T-cell (primary cell): ENCODE measurements at regions of chr5 and their contacts with region 1.

Region 1: GRCh38 chr5:158434749-158435148 is 575.8 kb upstream of the CLINT1 start:
- DNase-seq: no peak
- ATAC-seq: peak in 1 of 4 experiments; percentile 21
- H3K4me3 ChIP-seq: no peak overlapping the region
- H3K4me3 Mint-ChIP-seq: peak overlapping the region in 2 of 3 donors; percentile 49 to 76
- H3K27ac ChIP-seq: no peak overlapping the region
- H3K27ac Mint-ChIP-seq: peak overlapping the region in 1 of 2 donors; percentile 44
- H3K4me1 ChIP-seq: peaks cover 10 to 50% of the 10 kb centered on the region in 2 experiments
- H3K4me1 Mint-ChIP-seq: peaks cover 56 to 59% (median 58%) of the 10 kb centered on the region in 3 donors
- H3K27me3 ChIP-seq: no peaks in the 10 kb centered on the region
- H3K27me3 Mint-ChIP-seq: no peaks in the 10 kb centered on the region

Region 2: DNA sequence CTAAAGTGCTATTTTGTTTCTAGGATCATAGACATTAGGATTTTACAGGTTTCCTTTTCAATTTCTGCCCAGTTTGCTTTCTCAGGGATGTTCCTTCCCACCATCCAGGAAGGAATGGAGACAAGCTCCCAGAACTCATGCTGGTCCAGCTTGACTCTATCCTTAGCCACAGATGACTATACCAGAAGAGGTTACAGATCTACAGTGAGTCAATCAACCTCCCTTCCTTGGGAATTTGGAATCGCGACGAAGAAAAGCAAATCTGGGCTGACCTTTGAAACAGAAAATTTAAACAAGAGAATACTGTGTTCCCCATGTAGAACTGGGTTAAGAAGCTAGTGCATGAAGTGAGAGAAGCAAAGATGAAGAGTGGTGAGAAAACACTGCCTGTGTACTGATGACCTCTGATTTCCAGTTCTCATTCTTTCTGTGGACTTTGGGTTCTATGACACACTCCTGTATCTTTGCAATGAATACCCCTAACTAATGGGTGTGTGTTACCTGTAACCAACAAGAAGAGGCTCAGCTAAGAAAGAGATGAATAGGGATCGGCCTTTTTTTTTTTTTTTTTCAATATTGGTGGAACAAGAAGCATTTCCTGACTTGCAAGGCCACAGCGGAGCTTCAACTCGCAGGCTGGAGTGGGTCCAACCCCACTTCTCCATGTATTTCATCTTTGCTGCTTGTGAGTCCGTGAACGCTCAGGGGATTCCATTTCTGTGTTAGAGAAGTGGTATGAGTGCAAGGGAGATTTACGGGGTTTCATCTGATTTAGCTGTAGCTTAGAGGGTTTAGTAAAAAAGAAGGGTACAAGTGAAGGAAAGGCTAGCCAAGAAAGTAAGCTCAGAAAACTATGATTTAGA is 11.9 kb before region 1 on chr5:
- CTCF ChIA-PET with region 1: interaction called in 1 of 2 experiments, 11 read pairs
- POLR2A ChIA-PET with region 1: no interaction called
- DNase-seq: no peak
- ATAC-seq: no peak
- H3K4me3 ChIP-seq: no peak overlapping the region
- H3K4me3 Mint-ChIP-seq: no peak overlapping the region
- H3K27ac ChIP-seq: no peak overlapping the region
- H3K27ac Mint-ChIP-seq: no peak overlapping the region
- H3K4me1 ChIP-seq: no peaks in the 10 kb centered on the region
- H3K4me1 Mint-ChIP-seq: peaks cover 0 to 3% (median 0%) of the 10 kb centered on the region in 3 donors
- H3K27me3 ChIP-seq: no peaks in the 10 kb centered on the region
- H3K27me3 Mint-ChIP-seq: peaks cover 0 to 1% of the 10 kb centered on the region in 2 donors

Region 3: GRCh38 chr5:158485604-158486081 is 50.9 kb after region 1 on chr5:
- CTCF ChIA-PET with region 1: no interaction called
- POLR2A ChIA-PET with region 1: no interaction called
- DNase-seq: no peak
- ATAC-seq: no peak
- H3K4me3 ChIP-seq: no peak overlapping the region
- H3K4me3 Mint-ChIP-seq: no peak overlapping the region
- H3K27ac ChIP-seq: no peak overlapping the region
- H3K27ac Mint-ChIP-seq: no peak overlapping the region
- H3K4me1 ChIP-seq: peaks cover 0 to 5% of the 10 kb centered on the region in 2 experiments
- H3K4me1 Mint-ChIP-seq: no peaks in the 10 kb centered on the region
- H3K27me3 ChIP-seq: peaks cover 0 to 5% of the 10 kb centered on the region in 2 experiments
- H3K27me3 Mint-ChIP-seq: peaks cover 4 to 9% of the 10 kb centered on the region in 2 donors

Region 4: GRCh38 chr5:158716668-158717067 is 281.9 kb after region 1 on chr5:
- CTCF ChIA-PET with region 1: no interaction called
- POLR2A ChIA-PET with region 1: no interaction called
- DNase-seq: no peak
- ATAC-seq: no peak
- H3K4me3 ChIP-seq: no peak overlapping the region
- H3K4me3 Mint-ChIP-seq: no peak overlapping the region
- H3K27ac ChIP-seq: no peak overlapping the region
- H3K27ac Mint-ChIP-seq: no peak overlapping the region
- H3K4me1 ChIP-seq: no peaks in the 10 kb centered on the region
- H3K4me1 Mint-ChIP-seq: no peaks in the 10 kb centered on the region
- H3K27me3 ChIP-seq: peaks cover 0 to 9% of the 10 kb centered on the region in 2 experiments
- H3K27me3 Mint-ChIP-seq: peaks cover 10% of the 10 kb centered on the region in 2 donors